ENCODE measurements at regions of chr9 and their contacts with region 1.

Region 1: DNA sequence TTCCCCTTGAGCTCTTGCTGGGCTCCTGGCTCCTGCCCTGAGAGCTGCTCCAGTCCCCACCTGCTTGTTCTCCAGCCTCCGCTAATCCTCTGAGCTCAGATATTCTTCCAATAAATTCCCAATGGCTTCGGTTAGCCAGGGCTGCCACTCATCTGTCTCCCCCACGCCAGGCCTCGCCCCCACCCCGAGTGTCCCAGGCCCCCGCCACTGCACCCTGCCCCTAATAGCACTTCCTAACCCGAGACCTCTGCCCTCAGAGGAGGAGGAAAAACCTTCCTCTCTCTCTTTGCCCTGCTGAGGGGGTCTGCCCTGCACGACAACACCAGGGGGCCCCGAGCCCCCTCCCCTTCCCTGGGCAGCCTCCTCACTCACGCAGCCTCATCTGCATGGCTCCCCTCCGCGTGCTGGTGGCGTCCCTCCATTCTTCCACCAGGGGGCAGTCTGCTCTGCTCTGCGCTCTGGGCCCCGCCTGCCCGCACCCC is 5.4 kb upstream of the LCN15 start:
- DNase-seq: peak; percentile 63
- H3K4me3 Mint-ChIP-seq: no peak overlapping the region
- H3K27ac Mint-ChIP-seq: no peak overlapping the region
- H3K4me1 Mint-ChIP-seq: peaks cover 16% of the 10 kb centered on the region
- H3K27me3 Mint-ChIP-seq: peaks cover 10% of the 10 kb centered on the region

Region 2: GRCh38 chr9:136671646-136672430 is 97.9 kb before region 1 on chr9:
- CTCF ChIA-PET with region 1: no interaction called
- POLR2A ChIA-PET with region 1: no interaction called
- DNase-seq: peak; percentile 41
- H3K4me3 Mint-ChIP-seq: no peak overlapping the region
- H3K27ac Mint-ChIP-seq: no peak overlapping the region
- H3K4me1 Mint-ChIP-seq: no peaks in the 10 kb centered on the region
- H3K27me3 Mint-ChIP-seq: no peaks in the 10 kb centered on the region

Region 3: DNA sequence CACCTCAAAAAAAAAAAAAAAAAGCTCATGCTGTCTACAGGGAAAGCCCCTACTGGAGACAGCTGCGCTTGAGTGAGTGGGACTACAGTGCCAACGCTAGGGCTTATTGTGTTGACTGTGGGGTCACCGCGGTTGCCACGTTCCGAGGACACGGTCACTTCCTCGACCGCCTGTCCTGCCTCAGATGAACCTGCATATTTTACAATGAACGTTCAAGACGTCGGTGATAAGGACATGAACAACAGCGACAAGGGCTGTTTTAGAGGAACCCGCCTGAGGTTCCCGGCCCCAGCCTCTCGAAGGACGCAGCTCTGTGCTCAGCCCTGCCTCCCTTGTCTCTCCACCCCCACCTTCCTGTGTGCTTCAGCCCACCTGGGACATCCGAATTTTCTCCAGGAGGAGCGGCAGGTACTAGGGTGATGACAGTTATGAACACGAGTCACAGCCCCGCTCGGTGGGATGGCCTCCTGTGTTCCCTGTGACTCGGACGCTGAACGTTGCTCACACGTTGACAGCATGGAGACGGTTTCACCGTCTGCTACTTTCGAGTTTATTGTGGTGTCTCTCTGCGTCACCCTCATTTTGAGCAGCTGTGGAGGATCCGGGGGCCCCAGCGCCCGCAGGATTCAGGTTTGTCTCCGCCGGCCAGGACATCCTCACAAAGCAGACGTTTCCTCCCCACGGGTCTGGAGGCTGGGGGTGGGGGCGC is 68.6 kb before region 1 on chr9:
- CTCF ChIA-PET with region 1: no interaction called
- POLR2A ChIA-PET with region 1: no interaction called
- DNase-seq: peak; percentile 69
- H3K4me3 Mint-ChIP-seq: peak overlapping the region; percentile 72
- H3K27ac Mint-ChIP-seq: peak overlapping the region; percentile 70
- H3K4me1 Mint-ChIP-seq: peaks cover 21% of the 10 kb centered on the region
- H3K27me3 Mint-ChIP-seq: peaks cover 30% of the 10 kb centered on the region

Region 4: GRCh38 chr9:136779808-136780207 is 10.1 kb after region 1 on chr9:
- CTCF ChIA-PET with region 1: interaction called, 20 read pairs
- POLR2A ChIA-PET with region 1: interaction called, 3 read pairs
- DNase-seq: no peak
- H3K4me3 Mint-ChIP-seq: no peak overlapping the region
- H3K27ac Mint-ChIP-seq: no peak overlapping the region
- H3K4me1 Mint-ChIP-seq: peaks cover 6% of the 10 kb centered on the region
- H3K27me3 Mint-ChIP-seq: peaks cover 46% of the 10 kb centered on the region

Measured in activated CD4-positive, alpha-beta memory T cell treated with anti-CD3 and anti-CD28 coated beads, Interleukin-2, amount 10 ng/mL, durations not matched to agents 7 days and 5 days (primary cell).